ENCODE measurements at regions of chr11 and their contacts with region 1.

Region 1: GRCh38 chr11:61695917-61696316 is 15.7 kb downstream of the DAGLA start:
- DNase-seq: peak; percentile 67 to 96 (median 87)
- ATAC-seq: peak; percentile 99
- H3K4me3 ChIP-seq: peak overlapping the region; percentile 55
- H3K4me3 Mint-ChIP-seq: peak overlapping the region; percentile 71 to 80 (median 76)
- H3K27ac ChIP-seq: peak overlapping the region; percentile 71
- H3K27ac Mint-ChIP-seq: peak overlapping the region; percentile 76 to 97 (median 86)
- H3K4me1 ChIP-seq: peaks cover 14 to 31% of the 10 kb centered on the region in 2 donors
- H3K4me1 Mint-ChIP-seq: peaks cover 18 to 29% (median 26%) of the 10 kb centered on the region in 7 donors
- H3K27me3 ChIP-seq: no peaks in the 10 kb centered on the region
- H3K27me3 Mint-ChIP-seq: no peaks in the 10 kb centered on the region

Region 2: DNA sequence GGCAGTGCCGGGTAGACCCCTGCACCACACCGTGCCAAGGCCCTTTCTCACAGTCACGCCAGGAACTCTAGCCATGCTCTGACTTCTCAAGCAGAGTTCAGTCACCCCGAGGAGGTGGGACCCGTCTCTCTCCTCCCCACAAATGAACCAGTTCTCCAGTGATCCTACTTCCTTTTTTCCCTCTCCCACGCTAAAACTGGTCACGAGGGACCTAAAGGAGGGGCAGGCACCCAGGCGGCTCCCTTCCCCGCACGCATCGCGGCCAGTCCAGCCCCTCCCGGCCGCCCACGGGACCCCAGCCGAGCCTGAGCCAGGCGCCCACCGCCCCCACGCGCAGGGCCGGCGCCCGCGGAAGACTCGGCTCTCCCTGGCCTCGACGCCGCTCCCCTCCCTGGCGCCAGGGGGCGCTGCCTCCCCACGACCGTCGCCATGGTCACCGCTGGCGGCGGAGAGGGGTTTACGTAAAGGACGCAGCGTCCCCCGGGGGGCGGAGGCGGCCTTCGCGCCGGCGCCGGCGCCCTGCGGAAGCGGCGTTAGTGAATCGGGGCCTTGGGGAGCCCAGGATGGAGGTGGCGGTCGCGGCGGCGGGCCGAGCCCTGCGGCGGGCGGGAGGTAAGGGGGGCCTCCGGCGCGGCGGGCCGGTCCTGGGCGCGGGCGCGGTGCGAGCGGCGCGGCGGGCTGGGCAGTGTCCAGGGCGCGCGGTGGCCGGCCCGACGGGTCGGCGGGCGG is 15.9 kb before region 1 on chr11 and contains the start of gene DAGLA:
- CTCF ChIA-PET with region 1: interaction called, 3 read pairs
- POLR2A ChIA-PET with region 1: interaction called, 9 read pairs
- intact Hi-C with region 1: loop called (anchors 1 kb)
- DNase-seq: peak; percentile 60 to 91 (median 74)
- ATAC-seq: peak; percentile 89
- H3K4me3 ChIP-seq: no peak within 1 kb of the TSS
- H3K4me3 Mint-ChIP-seq: peak within 1 kb of the TSS in 9 of 10 donors; percentile 38 to 77 (median 67)
- H3K27ac ChIP-seq: no peak within 1 kb of the TSS
- H3K27ac Mint-ChIP-seq: peak within 1 kb of the TSS in 4 of 9 donors; percentile 43 to 65 (median 55)
- H3K4me1 ChIP-seq: peaks cover 14 to 16% of the 10 kb centered on the region in 2 donors
- H3K4me1 Mint-ChIP-seq: peaks cover 0 to 9% (median 5%) of the 10 kb centered on the region in 7 donors
- H3K27me3 ChIP-seq: peaks cover 0 to 3% of the 10 kb centered on the region in 2 donors
- H3K27me3 Mint-ChIP-seq: peaks cover 2 to 27% (median 21%) of the 10 kb centered on the region in 5 donors
- total RNA-seq, gene DAGLA: 0.15 to 2.1 (median 0.35) TPM

Region 3: GRCh38 chr11:61707574-61707973 is 11.7 kb after region 1 on chr11:
- CTCF ChIA-PET with region 1: no interaction called
- POLR2A ChIA-PET with region 1: no interaction called
- intact Hi-C with region 1: no loop called
- DNase-seq: no peak
- ATAC-seq: no peak
- H3K4me3 ChIP-seq: no peak overlapping the region
- H3K4me3 Mint-ChIP-seq: no peak overlapping the region
- H3K27ac ChIP-seq: no peak overlapping the region
- H3K27ac Mint-ChIP-seq: no peak overlapping the region
- H3K4me1 ChIP-seq: no peaks in the 10 kb centered on the region
- H3K4me1 Mint-ChIP-seq: peaks cover 0 to 12% (median 0%) of the 10 kb centered on the region in 7 donors
- H3K27me3 ChIP-seq: no peaks in the 10 kb centered on the region
- H3K27me3 Mint-ChIP-seq: no peaks in the 10 kb centered on the region

Region 4: DNA sequence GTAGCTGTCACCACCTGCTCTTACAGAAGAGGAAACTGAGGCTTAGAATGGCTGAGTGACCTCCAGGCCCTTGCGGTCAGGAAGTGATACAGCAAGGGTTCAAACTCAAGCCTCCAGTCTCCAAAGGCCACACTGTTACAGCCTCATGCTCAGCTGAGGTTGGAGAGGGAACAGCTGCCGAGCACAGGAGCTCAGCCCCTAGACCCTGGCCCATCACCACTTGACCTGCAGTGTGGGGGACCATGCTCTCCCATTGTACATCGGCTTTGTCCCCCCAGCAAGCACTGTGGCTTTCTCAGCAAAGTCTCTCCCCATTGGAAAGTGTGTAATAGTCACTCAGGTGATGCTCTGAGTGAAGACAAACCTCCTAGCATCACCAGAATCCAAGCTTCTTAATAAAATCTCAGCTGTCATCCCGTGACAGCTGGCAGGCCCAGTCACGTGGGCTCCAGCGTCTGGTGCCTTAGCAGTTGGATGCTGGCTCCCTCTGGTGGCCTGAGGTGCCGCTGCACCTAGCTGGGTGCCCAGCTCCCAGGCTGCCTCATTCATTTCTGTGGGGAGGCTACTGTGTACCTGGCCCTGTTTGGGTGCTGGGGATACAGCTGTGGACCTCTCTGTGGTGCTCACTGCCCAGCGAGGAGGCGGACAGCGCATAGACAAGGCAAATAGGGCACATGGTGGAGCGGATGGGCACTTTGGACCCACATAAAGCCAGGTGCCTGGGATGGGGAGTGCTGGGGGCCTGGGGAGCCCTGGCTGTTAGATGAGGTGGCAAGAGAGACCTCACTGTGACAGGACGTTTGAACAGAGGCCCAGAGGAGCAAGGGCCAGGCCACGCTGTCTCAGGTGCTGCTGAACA is 37.4 kb after region 1 on chr11:
- CTCF ChIA-PET with region 1: interaction called, 9 read pairs
- POLR2A ChIA-PET with region 1: interaction called, 5 read pairs
- intact Hi-C with region 1: loop called (anchors 1 kb)
- DNase-seq: peak; percentile 69 to 85 (median 80)
- ATAC-seq: peak; percentile 98
- H3K4me3 ChIP-seq: no peak overlapping the region
- H3K4me3 Mint-ChIP-seq: no peak overlapping the region
- H3K27ac ChIP-seq: no peak overlapping the region
- H3K27ac Mint-ChIP-seq: peak overlapping the region in 7 of 9 donors; percentile 17 to 84 (median 46)
- H3K4me1 ChIP-seq: no peaks in the 10 kb centered on the region
- H3K4me1 Mint-ChIP-seq: peaks cover 5 to 8% (median 5%) of the 10 kb centered on the region in 7 donors
- H3K27me3 ChIP-seq: no peaks in the 10 kb centered on the region
- H3K27me3 Mint-ChIP-seq: peaks cover 0 to 4% (median 0%) of the 10 kb centered on the region in 5 donors